ENCODE measurements at regions of chr13 and their contacts with region 1.

Region 1: GRCh38 chr13:59906413-59907049 is 257.2 kb downstream of the DIAPH3 start:
- DNase-seq: no peak
- H3K4me3 ChIP-seq: no peak overlapping the region
- H3K27ac ChIP-seq: no peak overlapping the region
- H3K27me3 ChIP-seq: no peaks in the 10 kb centered on the region
- CTCF ChIP-seq: peak in 55 of 56 donors; percentile 11 to 71 (median 51)

Region 2: GRCh38 chr13:59950266-59950665 is 43.7 kb after region 1 on chr13:
- intact Hi-C with region 1: loop called in 1 of 2 experiments (anchors 5 kb)
- DNase-seq: no peak
- H3K4me3 ChIP-seq: no peak overlapping the region
- H3K27ac ChIP-seq: no peak overlapping the region
- H3K27me3 ChIP-seq: no peaks in the 10 kb centered on the region
- CTCF ChIP-seq: no peak

Measured in dorsolateral prefrontal cortex (tissue), 120 donors.